ENCODE measurements at regions of chr3 and their contacts with region 1.

Region 1: DNA sequence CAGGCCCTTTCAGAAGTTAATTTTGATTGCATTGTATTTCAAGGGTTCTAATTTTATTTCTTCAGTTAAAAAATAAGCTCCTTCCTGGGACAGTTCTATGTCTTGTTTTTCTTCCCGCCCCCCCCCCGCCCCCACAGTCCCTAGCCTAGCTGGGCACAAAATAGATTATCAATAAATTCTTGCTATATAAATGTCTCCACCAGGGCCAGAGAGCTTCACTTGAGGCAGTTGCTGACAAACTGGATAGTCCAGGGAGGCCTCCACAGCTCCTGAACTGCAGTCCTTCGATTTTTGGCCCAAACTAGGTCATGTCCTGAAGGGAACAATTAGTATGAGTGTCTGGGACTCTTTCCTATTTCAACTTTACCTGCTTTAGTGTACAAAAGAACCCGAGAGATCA is 9.9 kb upstream of the CSPG5 start:
- DNase-seq: no peak
- H3K4me3 ChIP-seq: no peak overlapping the region
- H3K27ac ChIP-seq: no peak overlapping the region
- H3K4me1 ChIP-seq: peaks cover 2% of the 10 kb centered on the region
- H3K27me3 ChIP-seq: no peaks in the 10 kb centered on the region
- CTCF ChIP-seq: no peak
- POLR2A ChIP-seq: no peak

Region 2: DNA sequence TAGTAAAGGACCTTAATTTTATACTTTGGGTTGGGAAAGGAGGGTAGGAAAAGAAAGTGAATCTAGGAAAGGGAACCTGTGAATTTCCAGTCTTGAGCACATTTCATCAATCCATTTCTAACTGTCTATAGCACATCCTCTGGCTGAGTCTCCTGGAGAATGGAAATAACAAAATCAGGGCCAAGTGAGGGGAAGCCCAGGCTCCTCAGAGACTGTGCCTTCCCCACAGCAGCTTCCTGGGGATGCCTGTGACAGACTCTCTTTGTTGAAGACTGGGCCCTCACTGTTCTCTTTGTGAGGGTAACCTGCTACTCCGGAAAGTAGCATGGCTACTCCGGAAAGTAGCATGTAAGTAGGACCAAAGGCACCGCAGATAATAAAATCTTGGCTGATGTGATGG is 12.7 kb after region 1 on chr3:
- CTCF ChIA-PET with region 1: interaction called, 12 read pairs
- POLR2A ChIA-PET with region 1: no interaction called
- dilution Hi-C with region 1: no loop called
- intact Hi-C with region 1: no loop called
- DNase-seq: no peak
- H3K4me3 ChIP-seq: no peak overlapping the region
- H3K27ac ChIP-seq: no peak overlapping the region
- H3K4me1 ChIP-seq: peaks cover 3% of the 10 kb centered on the region
- H3K27me3 ChIP-seq: no peaks in the 10 kb centered on the region
- CTCF ChIP-seq: no peak
- POLR2A ChIP-seq: no peak

Region 3: GRCh38 chr3:47652142-47652541 is 63.6 kb after region 1 on chr3:
- CTCF ChIA-PET with region 1: no interaction called
- POLR2A ChIA-PET with region 1: no interaction called
- dilution Hi-C with region 1: no loop called
- intact Hi-C with region 1: no loop called
- DNase-seq: no peak
- H3K4me3 ChIP-seq: no peak overlapping the region
- H3K27ac ChIP-seq: no peak overlapping the region
- H3K4me1 ChIP-seq: no peaks in the 10 kb centered on the region
- H3K27me3 ChIP-seq: no peaks in the 10 kb centered on the region
- CTCF ChIP-seq: no peak
- POLR2A ChIP-seq: no peak

Measured in endothelial cell of umbilical vein (primary cell).